BJ (cell line): ENCODE measurements at regions of chr11 and their contacts with region 1.

Region 1: GRCh38 chr11:108697872-108698473 is 33.1 kb downstream of the DDX10 start:
- DNase-seq: no peak
- H3K4me3 ChIP-seq: no peak overlapping the region
- H3K27me3 ChIP-seq: no peaks in the 10 kb centered on the region
- CTCF ChIP-seq: peak; percentile 98

Region 2: GRCh38 chr11:108708173-108708572 is 10.2 kb after region 1 on chr11:
- CTCF ChIA-PET with region 1: interaction called, 15 read pairs
- POLR2A ChIA-PET with region 1: no interaction called
- DNase-seq: no peak
- H3K4me3 ChIP-seq: no peak overlapping the region
- H3K27me3 ChIP-seq: no peaks in the 10 kb centered on the region
- CTCF ChIP-seq: no peak

Region 3: DNA sequence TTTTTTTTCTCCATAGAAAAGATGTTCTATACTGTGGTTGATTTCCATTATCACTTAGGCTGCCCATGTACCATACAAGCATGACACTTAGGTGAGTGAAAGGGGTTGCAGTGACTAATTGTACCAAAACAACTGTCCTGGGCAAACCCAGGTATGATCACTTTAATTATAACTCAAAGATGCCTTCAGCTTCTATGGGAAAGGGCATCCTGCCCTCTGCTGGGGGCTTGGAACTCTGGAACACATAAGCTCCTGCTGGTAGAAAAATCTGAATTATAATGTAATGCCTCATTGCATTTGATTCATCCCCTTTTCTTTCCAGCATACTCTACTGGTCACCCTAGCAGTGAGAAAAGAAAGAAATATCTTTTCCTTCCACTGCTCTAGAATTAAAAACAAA is 173.2 kb after region 1 on chr11:
- CTCF ChIA-PET with region 1: interaction called, 19 read pairs
- POLR2A ChIA-PET with region 1: no interaction called
- DNase-seq: no peak
- H3K4me3 ChIP-seq: no peak overlapping the region
- H3K27me3 ChIP-seq: no peaks in the 10 kb centered on the region
- CTCF ChIP-seq: peak; percentile 60

Region 4: GRCh38 chr11:109697140-109697843 is 999.3 kb after region 1 on chr11:
- CTCF ChIA-PET with region 1: interaction called, 20 read pairs
- POLR2A ChIA-PET with region 1: no interaction called
- DNase-seq: no peak
- H3K4me3 ChIP-seq: no peak overlapping the region
- H3K27me3 ChIP-seq: no peaks in the 10 kb centered on the region
- CTCF ChIP-seq: peak; percentile 76

Region 5: GRCh38 chr11:109939166-109939810 is 1241.3 kb after region 1 on chr11:
- CTCF ChIA-PET with region 1: interaction called, 10 read pairs
- POLR2A ChIA-PET with region 1: no interaction called
- DNase-seq: peak; percentile 4
- H3K4me3 ChIP-seq: no peak overlapping the region
- H3K27me3 ChIP-seq: no peaks in the 10 kb centered on the region
- CTCF ChIP-seq: peak; percentile 56